ENCODE measurements at regions of chr6 and their contacts with region 1.

Region 1: GRCh38 chr6:159693128-159693893 is at the start of gene SOD2:
- DNase-seq: peak; percentile 92 to 95
- ATAC-seq: peak; percentile 92
- H3K4me3 ChIP-seq: peak within 1 kb of the TSS; percentile 52 to 96
- H3K27ac ChIP-seq: peak within 1 kb of the TSS; percentile 83 to 89
- H3K4me1 ChIP-seq: no peaks in the 10 kb centered on the region
- H3K27me3 ChIP-seq: no peaks in the 10 kb centered on the region
- total RNA-seq, gene SOD2: 387 to 624 TPM

Region 2: GRCh38 chr6:158920311-158920915 is 772.9 kb before region 1 on chr6:
- intact Hi-C with region 1: no loop called
- DNase-seq: no peak
- ATAC-seq: no peak
- H3K4me3 ChIP-seq: no peak overlapping the region
- H3K27ac ChIP-seq: no peak overlapping the region
- H3K4me1 ChIP-seq: no peaks in the 10 kb centered on the region
- H3K27me3 ChIP-seq: no peaks in the 10 kb centered on the region

Region 3: DNA sequence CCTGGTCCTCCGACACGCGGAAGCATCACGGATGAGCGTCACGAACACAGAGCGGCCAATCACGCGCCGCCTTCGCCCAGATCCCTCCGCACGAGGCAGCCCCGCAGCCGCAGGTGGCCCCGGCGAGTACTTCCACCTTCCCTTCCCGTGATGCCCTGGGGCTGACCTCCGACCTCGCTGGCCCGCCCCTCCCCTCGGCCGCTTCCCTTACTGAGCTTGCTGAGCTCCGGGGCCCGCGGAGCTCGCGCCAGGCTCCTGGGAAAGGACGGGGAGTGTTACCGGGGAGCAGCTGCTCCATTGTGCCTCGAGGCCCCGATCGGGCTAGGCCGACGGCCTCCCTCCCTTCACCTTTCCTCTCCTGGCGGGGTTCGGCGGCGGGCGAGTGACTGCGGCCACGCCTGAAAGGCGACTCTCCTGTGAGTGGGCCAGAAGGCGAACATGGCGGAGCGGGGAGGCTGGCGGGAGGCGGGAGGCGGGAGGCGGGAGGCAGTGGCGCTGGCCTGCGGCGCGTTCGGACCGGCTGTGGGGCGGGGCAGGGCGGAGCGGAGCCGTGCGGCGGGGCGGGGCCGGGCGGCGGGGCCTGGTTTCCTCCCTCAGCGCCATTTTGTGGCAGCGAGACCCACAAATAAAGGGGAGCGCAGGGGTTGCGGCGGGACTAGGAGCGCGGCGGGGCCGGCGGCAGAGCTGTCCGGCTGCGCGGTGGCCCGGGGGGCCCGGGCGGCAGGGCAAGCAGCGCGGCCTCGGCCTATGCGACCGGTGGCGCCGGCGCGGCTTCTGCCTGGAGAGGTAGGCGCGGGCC is 33.8 kb after region 1 on chr6 and contains the start of gene WTAP:
- intact Hi-C with region 1: loop called (anchors 2 to 5 kb)
- DNase-seq: peak; percentile 97 to 98
- ATAC-seq: peak; percentile 96
- H3K4me3 ChIP-seq: peak within 1 kb of the TSS; percentile 80 to 81
- H3K27ac ChIP-seq: peak within 1 kb of the TSS; percentile 93 to 97
- H3K4me1 ChIP-seq: peaks cover 0 to 2% of the 10 kb centered on the region in 2 donors
- H3K27me3 ChIP-seq: no peaks in the 10 kb centered on the region
- total RNA-seq, gene WTAP: 91.7 to 94.7 TPM

Region 4: GRCh38 chr6:159789377-159790148 is 96.3 kb after region 1 on chr6 and contains the start of gene TCP1:
- intact Hi-C with region 1: loop called (anchors 1 kb)
- DNase-seq: peak; percentile 99 to 100
- ATAC-seq: peak; percentile 97
- H3K4me3 ChIP-seq: peak within 1 kb of the TSS; percentile 60 to 82
- H3K27ac ChIP-seq: peak within 1 kb of the TSS; percentile 10 to 72
- H3K4me1 ChIP-seq: peaks cover 0 to 3% of the 10 kb centered on the region in 2 donors
- H3K27me3 ChIP-seq: no peaks in the 10 kb centered on the region
- total RNA-seq, gene TCP1: 110 to 146 TPM

Region 5: DNA sequence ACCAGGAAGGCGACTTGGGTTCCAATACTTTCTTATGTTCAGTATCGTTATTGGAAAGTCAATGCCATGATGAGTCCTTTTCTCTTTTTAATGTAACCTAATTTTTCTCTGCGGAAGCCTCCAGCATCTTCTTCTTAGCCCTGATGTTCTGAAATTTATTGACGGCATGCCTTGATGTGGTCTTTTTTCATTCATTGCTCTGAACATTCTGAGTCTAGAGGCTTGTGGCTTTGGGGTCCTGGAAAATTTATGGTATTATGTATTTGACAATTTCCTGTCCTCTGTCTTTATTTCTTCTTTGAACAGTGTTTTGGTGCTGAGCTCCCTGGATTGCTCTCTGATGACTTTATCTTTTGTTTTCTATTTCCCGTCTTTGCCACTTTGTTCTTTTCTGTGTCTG is 168.8 kb after region 1 on chr6:
- intact Hi-C with region 1: loop called in 1 of 2 experiments (anchors 10 kb)
- DNase-seq: no peak
- ATAC-seq: no peak
- H3K4me3 ChIP-seq: no peak overlapping the region
- H3K27ac ChIP-seq: no peak overlapping the region
- H3K4me1 ChIP-seq: no peaks in the 10 kb centered on the region
- H3K27me3 ChIP-seq: no peaks in the 10 kb centered on the region

Region 6: DNA sequence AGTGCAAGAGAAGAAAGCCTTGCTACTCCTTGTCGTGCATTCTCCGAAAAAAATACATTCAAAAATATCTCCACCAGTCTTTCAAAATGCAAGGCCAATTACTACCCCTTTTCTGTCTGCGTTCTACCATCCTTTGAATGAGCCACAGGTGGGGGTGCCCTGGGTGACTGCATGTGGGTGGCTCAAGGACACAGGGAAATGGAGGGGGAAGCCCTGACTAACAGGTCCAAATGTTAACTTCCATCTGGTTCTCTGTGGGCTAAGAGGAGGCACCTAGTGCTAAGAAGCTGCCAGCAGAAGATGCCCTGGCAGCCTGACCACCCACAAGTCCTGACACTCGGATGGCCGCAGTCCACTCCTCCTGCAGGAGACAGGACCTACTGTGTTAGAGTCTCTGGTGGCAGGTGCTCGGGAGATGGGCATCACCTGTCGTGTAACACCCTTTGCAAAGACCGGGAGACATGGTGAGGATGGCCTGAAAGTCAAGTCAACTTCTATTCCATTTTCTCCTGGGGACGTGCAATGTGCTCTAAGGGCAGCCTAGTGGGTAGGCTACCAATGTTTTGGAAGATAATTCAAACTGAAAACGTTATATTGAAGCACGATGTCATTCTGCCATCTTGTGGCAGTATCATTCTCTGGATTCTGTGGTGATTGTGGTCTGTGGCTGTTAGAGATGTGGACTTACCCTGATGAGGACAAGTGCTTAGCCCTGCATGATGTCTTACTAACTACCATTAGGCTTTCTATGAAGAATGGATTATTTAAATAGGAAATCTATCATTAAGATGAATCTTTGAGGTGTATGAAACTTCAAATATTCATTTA is 248.2 kb after region 1 on chr6:
- intact Hi-C with region 1: loop called (anchors 5 to 10 kb)
- DNase-seq: no peak
- ATAC-seq: peak; percentile 70
- H3K4me3 ChIP-seq: no peak overlapping the region
- H3K27ac ChIP-seq: no peak overlapping the region
- H3K4me1 ChIP-seq: peaks cover 2 to 5% of the 10 kb centered on the region in 2 donors
- H3K27me3 ChIP-seq: no peaks in the 10 kb centered on the region

Measured in aorta (tissue), 5 donors.